ENCODE measurements at regions of chr1 and their contacts with region 1.

Region 1: GRCh38 chr1:173020138-173020750 is 30.5 kb downstream of the TNFSF18 start:
- DNase-seq: peak; percentile 70
- ATAC-seq: peak; percentile 75
- H3K4me3 ChIP-seq: peak overlapping the region in 1 of 5 experiments; percentile 21
- H3K4me3 Mint-ChIP-seq: peak overlapping the region; percentile 75
- H3K27ac ChIP-seq: peak overlapping the region; percentile 84 to 92
- H3K27ac Mint-ChIP-seq: peak overlapping the region; percentile 94
- H3K4me1 ChIP-seq: peaks cover 56 to 62% of the 10 kb centered on the region in 2 donors
- H3K4me1 Mint-ChIP-seq: peaks cover 57% of the 10 kb centered on the region
- H3K27me3 ChIP-seq: no peaks in the 10 kb centered on the region
- H3K27me3 Mint-ChIP-seq: no peaks in the 10 kb centered on the region
- CTCF ChIP-seq: no peak

Region 2: DNA sequence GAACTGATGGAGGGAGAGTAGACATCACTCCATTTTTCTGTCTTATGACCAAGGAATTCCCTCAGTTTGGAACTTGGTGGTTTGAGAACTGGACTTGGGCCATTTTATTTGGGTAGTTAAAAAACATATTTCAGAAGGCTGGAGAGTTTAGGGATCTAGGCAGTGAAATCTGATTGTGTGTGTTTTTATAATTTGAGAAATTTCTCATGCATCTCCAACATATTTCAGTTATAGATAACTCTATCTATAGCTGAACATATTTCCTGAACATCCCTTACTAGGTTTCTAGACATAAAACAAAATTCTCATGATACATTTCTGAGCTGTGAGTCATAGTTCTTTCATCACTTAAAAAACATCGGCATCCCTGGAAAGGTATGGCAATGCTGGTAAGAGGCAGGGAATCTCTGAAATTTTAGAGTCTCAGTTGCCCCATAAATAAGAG is 258.6 kb before region 1 on chr1:
- CTCF ChIA-PET with region 1: no interaction called
- POLR2A ChIA-PET with region 1: no interaction called
- intact Hi-C with region 1: loop called (anchors 5 kb)
- DNase-seq: no peak
- ATAC-seq: no peak
- H3K4me3 ChIP-seq: no peak overlapping the region
- H3K4me3 Mint-ChIP-seq: no peak overlapping the region
- H3K27ac ChIP-seq: no peak overlapping the region
- H3K27ac Mint-ChIP-seq: no peak overlapping the region
- H3K4me1 ChIP-seq: peaks cover 23 to 24% of the 10 kb centered on the region in 2 donors
- H3K4me1 Mint-ChIP-seq: peaks cover 33% of the 10 kb centered on the region
- H3K27me3 ChIP-seq: peaks cover 0 to 6% (median 0%) of the 10 kb centered on the region in 4 experiments
- H3K27me3 Mint-ChIP-seq: peaks cover 7% of the 10 kb centered on the region
- CTCF ChIP-seq: no peak

Region 3: DNA sequence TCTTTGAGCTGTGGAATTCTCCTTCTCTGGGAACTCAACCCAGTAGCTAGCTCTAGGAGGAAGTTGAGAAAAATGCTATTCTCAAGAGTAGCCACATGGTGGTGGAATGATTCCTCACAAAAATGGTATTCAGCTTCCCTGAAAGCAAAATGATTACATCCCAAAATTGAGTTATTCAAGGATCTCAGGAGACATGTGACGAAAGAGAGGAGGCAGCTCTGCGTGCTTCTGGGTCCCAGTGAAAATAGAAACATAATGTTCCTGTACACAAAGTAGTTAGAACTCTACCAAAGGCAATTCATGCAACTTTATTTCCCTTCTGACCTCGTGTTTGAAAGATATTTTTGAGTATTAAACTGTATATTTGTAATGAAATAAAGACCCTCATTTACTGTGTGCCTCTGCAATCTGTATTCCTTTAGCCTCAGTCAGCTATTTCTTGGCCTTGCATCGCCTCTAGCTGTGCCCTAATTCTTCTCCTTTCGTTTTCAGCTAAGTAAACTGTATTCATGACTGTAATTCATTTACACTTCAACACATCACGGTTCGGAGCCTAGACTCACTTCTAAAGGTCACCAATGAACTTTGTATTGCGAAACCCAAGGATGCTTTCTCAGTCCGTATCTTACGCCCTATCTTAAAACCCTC is 194.0 kb before region 1 on chr1:
- CTCF ChIA-PET with region 1: interaction called, 10 read pairs
- POLR2A ChIA-PET with region 1: no interaction called
- intact Hi-C with region 1: no loop called
- DNase-seq: peak; percentile 43
- ATAC-seq: peak; percentile 62
- H3K4me3 ChIP-seq: peak overlapping the region in 1 of 5 experiments; percentile 13
- H3K4me3 Mint-ChIP-seq: no peak overlapping the region
- H3K27ac ChIP-seq: no peak overlapping the region
- H3K27ac Mint-ChIP-seq: no peak overlapping the region
- H3K4me1 ChIP-seq: peaks cover 9% of the 10 kb centered on the region in 2 donors
- H3K4me1 Mint-ChIP-seq: no peaks in the 10 kb centered on the region
- H3K27me3 ChIP-seq: no peaks in the 10 kb centered on the region
- H3K27me3 Mint-ChIP-seq: no peaks in the 10 kb centered on the region
- CTCF ChIP-seq: peak; percentile 63

Region 4: GRCh38 chr1:173050865-173051264 is 30.6 kb after region 1 on chr1 and contains the start of gene TNFSF18:
- CTCF ChIA-PET with region 1: no interaction called
- POLR2A ChIA-PET with region 1: no interaction called
- intact Hi-C with region 1: loop called (anchors 5 kb)
- DNase-seq: no peak
- ATAC-seq: no peak
- H3K4me3 ChIP-seq: no peak within 1 kb of the TSS
- H3K4me3 Mint-ChIP-seq: no peak within 1 kb of the TSS
- H3K27ac ChIP-seq: no peak within 1 kb of the TSS
- H3K27ac Mint-ChIP-seq: no peak within 1 kb of the TSS
- H3K4me1 ChIP-seq: peaks cover 14 to 22% of the 10 kb centered on the region in 2 donors
- H3K4me1 Mint-ChIP-seq: peaks cover 32% of the 10 kb centered on the region
- H3K27me3 ChIP-seq: no peaks in the 10 kb centered on the region
- H3K27me3 Mint-ChIP-seq: peaks cover 9% of the 10 kb centered on the region
- CTCF ChIP-seq: no peak
- total RNA-seq, gene TNFSF18: not detected in 2 replicates

Region 5: DNA sequence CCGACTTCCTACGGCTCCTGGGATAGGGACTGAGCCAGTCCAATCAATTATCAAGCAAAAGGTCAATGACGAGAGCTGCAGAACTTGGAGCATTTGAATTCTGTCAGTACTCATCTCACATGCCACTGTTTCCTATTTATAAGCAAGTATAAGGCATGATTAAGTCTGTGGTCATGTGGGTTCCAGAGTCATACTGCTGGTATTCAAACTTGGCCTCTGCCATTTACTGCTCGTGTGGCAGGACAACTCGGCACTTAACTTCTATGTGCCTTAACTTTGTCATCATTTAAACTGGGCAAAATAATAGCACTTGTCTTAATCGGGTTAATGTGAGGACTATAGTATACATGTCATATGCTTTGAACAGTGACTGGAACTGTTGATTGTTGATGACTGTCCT is 75.4 kb after region 1 on chr1:
- CTCF ChIA-PET with region 1: no interaction called
- POLR2A ChIA-PET with region 1: no interaction called
- intact Hi-C with region 1: no loop called
- DNase-seq: no peak
- ATAC-seq: no peak
- H3K4me3 ChIP-seq: no peak overlapping the region
- H3K4me3 Mint-ChIP-seq: no peak overlapping the region
- H3K27ac ChIP-seq: no peak overlapping the region
- H3K27ac Mint-ChIP-seq: no peak overlapping the region
- H3K4me1 ChIP-seq: no peaks in the 10 kb centered on the region
- H3K4me1 Mint-ChIP-seq: peaks cover 2% of the 10 kb centered on the region
- H3K27me3 ChIP-seq: no peaks in the 10 kb centered on the region
- H3K27me3 Mint-ChIP-seq: no peaks in the 10 kb centered on the region
- CTCF ChIP-seq: no peak

Region 6: GRCh38 chr1:173190101-173190906 is 170.1 kb after region 1 on chr1:
- CTCF ChIA-PET with region 1: no interaction called
- POLR2A ChIA-PET with region 1: no interaction called
- intact Hi-C with region 1: loop called (anchors 10 kb)
- DNase-seq: no peak
- ATAC-seq: no peak
- H3K4me3 ChIP-seq: no peak overlapping the region
- H3K4me3 Mint-ChIP-seq: no peak overlapping the region
- H3K27ac ChIP-seq: no peak overlapping the region
- H3K27ac Mint-ChIP-seq: no peak overlapping the region
- H3K4me1 ChIP-seq: peaks cover 2 to 19% of the 10 kb centered on the region in 2 donors
- H3K4me1 Mint-ChIP-seq: peaks cover 15% of the 10 kb centered on the region
- H3K27me3 ChIP-seq: no peaks in the 10 kb centered on the region
- H3K27me3 Mint-ChIP-seq: no peaks in the 10 kb centered on the region
- CTCF ChIP-seq: no peak

Measured in B cell (primary cell).